Common myeloid progenitor, CD34-positive (primary cell): ENCODE measurements at regions of chr13 and their contacts with region 1.

Region 1: GRCh38 chr13:46893798-46894560 is 2.9 kb downstream of the HTR2A start:
- DNase-seq: peak; percentile 70 to 81 (median 80)
- H3K4me3 ChIP-seq: peak overlapping the region; percentile 60 to 94 (median 79)
- H3K27ac ChIP-seq: no peak overlapping the region
- H3K4me1 ChIP-seq: peaks cover 5 to 26% (median 11%) of the 10 kb centered on the region in 4 experiments
- H3K27me3 ChIP-seq: no peaks in the 10 kb centered on the region

Region 2: GRCh38 chr13:46577696-46578589 is 316.0 kb before region 1 on chr13:
- CTCF ChIA-PET with region 1: no interaction called
- POLR2A ChIA-PET with region 1: no interaction called
- DNase-seq: peak in 1 of 3 donors; percentile 19
- H3K4me3 ChIP-seq: peak overlapping the region in 1 of 7 experiments; percentile 1
- H3K27ac ChIP-seq: no peak overlapping the region
- H3K4me1 ChIP-seq: peaks cover 0 to 31% (median 12%) of the 10 kb centered on the region in 4 experiments
- H3K27me3 ChIP-seq: no peaks in the 10 kb centered on the region

Region 3: GRCh38 chr13:46778890-46779289 is 115.1 kb before region 1 on chr13:
- CTCF ChIA-PET with region 1: no interaction called
- POLR2A ChIA-PET with region 1: no interaction called
- DNase-seq: no peak
- H3K4me3 ChIP-seq: no peak overlapping the region
- H3K27ac ChIP-seq: no peak overlapping the region
- H3K4me1 ChIP-seq: peaks cover 0 to 2% (median 0%) of the 10 kb centered on the region in 4 experiments
- H3K27me3 ChIP-seq: no peaks in the 10 kb centered on the region

Region 4: GRCh38 chr13:47459512-47459911 is 565.5 kb after region 1 on chr13:
- CTCF ChIA-PET with region 1: interaction called, 14 read pairs
- POLR2A ChIA-PET with region 1: no interaction called
- DNase-seq: peak; percentile 31 to 66 (median 51)
- H3K4me3 ChIP-seq: no peak overlapping the region
- H3K27ac ChIP-seq: no peak overlapping the region
- H3K4me1 ChIP-seq: no peaks in the 10 kb centered on the region
- H3K27me3 ChIP-seq: no peaks in the 10 kb centered on the region